Activated CD4-positive, alpha-beta T cell treated with anti-CD3 and anti-CD28 coated beads, Interleukin-2, amount 10 ng/mL, durations not matched to agents 24 days and 14 days (primary cell): ENCODE measurements at regions of chrX and their contacts with region 1.

Region 1: DNA sequence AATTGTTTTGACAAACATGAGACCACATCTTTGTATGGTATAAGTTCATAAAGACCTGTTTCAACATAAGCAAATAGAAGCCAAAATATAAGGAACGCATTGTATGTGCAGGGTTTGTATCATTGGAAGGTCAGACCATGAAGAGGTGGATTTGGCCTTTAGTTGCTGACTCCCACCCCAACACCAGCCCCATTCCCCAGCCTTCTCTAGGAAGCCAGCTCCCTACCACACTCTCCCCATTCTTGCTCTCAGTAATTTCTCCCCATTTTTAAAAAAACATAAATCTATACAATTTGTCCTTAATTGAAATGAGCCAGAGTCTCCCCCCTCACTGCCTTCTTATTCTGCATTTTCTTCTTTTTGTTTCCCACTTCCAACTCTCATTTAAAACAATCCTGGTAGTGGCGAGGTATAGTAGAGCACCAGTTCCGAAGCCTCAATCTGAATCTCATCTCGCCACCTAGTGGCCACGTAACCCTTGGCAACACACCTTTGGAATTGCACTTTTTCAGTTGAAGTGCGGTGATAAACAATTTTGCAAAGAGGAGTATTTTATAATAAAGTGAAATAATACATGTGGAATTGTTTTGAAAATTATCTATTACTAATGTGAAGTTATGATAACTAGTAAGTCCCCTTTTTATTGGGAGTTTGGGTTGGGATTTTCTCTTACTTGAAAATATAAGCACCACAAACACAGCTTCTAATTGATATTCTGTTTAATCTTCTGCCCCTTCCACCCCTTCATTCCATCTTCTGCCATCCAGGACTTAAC is 126.6 kb downstream of the ASB9 start:
- DNase-seq: peak; percentile 82
- H3K4me3 Mint-ChIP-seq: peak overlapping the region; percentile 69
- H3K27ac Mint-ChIP-seq: peak overlapping the region; percentile 42
- H3K4me1 Mint-ChIP-seq: peaks cover 13% of the 10 kb centered on the region
- H3K27me3 Mint-ChIP-seq: peaks cover 3% of the 10 kb centered on the region

Region 2: GRCh38 chrX:14095702-14096101 is 1047.5 kb before region 1 on chrX:
- intact Hi-C with region 1: loop called (anchors 2 kb)
- DNase-seq: peak; percentile 76
- H3K4me3 Mint-ChIP-seq: no peak overlapping the region
- H3K27ac Mint-ChIP-seq: no peak overlapping the region
- H3K4me1 Mint-ChIP-seq: no peaks in the 10 kb centered on the region
- H3K27me3 Mint-ChIP-seq: peaks cover 1% of the 10 kb centered on the region

Region 3: DNA sequence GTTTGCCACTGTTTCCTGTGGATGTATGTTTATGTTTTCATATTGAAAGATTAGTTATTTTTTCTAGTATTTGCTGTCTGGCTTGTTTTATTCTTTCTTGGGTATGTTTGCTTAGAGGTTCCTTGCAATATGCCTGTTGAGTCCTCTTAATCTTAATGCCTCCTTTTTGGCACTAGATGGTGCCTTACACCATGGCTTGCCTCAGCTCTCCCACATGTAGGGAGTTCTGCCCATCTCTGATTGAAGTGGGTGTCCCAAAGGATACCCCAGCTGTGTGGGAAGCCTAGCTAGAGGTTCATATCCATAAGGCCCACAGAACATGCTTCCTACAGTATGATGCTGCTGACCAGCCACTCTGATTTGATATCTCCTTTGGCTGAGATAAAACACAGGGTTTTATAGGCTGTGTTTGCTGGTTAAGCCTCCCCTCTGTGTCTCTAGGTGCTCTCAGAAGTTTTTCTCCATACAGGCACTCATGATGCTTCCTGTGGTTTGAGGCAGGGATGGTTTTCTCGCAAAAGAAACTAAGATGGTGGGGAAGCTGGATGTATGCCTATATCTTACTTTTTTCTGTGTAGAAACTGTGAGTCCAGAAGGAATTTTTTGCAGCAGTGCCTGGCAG is 35.8 kb before region 1 on chrX:
- intact Hi-C with region 1: loop called (anchors 2 kb)
- DNase-seq: peak; percentile 55
- H3K4me3 Mint-ChIP-seq: no peak overlapping the region
- H3K27ac Mint-ChIP-seq: no peak overlapping the region
- H3K4me1 Mint-ChIP-seq: peaks cover 5% of the 10 kb centered on the region
- H3K27me3 Mint-ChIP-seq: peaks cover 4% of the 10 kb centered on the region

Region 4: DNA sequence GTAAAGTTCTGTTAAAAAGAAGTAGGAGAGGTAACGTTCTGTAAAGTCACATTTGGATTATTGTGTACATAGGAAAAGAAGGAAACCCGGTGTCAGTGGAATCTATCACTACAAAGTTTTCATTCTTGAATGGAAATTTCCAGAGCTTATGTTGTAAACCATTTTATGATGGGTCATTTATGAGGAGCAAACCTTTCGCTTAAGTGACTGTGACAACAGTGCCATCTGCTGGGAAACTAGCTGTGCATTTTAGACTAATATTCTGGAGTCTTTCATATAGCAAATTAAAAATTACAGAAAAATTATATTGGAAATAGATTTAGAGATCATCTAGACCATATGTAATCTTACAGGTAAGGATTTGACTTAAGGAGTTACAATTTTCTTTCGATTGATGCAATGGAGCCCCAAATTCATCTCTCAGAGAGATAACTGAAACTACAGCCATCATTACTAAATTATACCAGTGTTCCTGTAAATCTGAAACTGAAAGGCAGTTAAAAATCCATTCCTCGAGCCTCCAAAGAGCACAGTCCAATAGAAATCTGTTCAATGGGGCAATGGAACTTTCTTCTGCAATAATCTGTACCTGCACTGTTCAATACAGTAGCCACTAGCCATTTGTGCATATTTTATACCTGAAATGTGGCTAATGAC is 99.8 kb after region 1 on chrX:
- intact Hi-C with region 1: loop called (anchors 5 kb)
- DNase-seq: peak; percentile 80
- H3K4me3 Mint-ChIP-seq: no peak overlapping the region
- H3K27ac Mint-ChIP-seq: no peak overlapping the region
- H3K4me1 Mint-ChIP-seq: no peaks in the 10 kb centered on the region
- H3K27me3 Mint-ChIP-seq: no peaks in the 10 kb centered on the region